MCF 10A (cell line): ENCODE measurements at regions of chr22 and their contacts with region 1.

Region 1: GRCh38 chr22:41468381-41469217 is at the starts of genes ACO2 and PHF5A:
- DNase-seq: peak; percentile 98
- H3K4me3 Mint-ChIP-seq: peak within 1 kb of the TSS; percentile 96
- H3K27ac Mint-ChIP-seq: peak within 1 kb of the TSS; percentile 100
- H3K4me1 Mint-ChIP-seq: peaks cover 33% of the 10 kb centered on the region
- H3K27me3 Mint-ChIP-seq: no peaks in the 10 kb centered on the region
- CTCF ChIP-seq: no peak
- total RNA-seq, gene ACO2: 105 and 109 TPM in 2 replicates
- total RNA-seq, gene PHF5A: 62.3 and 68.8 TPM in 2 replicates

Region 2: DNA sequence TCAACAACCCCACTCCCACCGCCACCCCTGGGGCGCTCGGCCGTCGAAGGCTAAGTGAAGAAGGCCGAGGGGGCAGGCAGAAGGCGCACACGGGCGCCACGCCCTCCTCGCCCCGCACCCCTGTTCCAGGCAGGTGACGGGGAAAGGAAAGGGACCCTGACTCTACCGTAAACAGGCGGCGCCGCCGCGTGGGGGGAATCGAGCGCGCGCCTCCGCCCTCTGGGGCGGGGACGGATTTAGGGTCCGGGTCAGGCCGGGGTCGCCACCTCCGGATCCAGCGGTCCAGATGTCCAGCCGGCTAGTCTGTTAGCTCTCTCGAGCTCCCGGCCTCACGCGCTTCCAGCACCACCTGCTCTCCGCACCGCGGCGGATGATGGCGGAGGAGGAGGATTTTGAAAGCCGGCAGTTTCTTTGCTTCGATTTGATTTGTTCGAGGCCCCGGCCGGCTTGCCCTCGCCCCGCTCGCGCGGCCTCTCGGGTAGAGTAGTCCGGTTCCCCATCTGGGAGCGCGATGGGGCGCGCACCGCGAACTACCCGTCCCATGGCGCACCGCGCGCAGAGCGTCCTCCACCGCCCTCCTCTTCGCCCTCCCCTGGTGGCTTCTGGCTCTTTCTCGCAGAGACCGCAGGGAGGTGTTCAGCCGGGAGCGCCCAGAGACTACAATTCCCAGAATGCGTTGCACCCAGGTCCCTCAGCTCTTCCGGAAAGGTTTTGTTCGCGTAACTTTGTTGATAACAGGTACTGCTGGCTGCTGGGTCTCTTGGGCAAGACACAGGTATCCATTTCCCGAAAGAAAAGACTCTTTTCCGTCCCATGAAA is 182.6 kb before region 1 on chr22 and contains the start of gene RANGAP1:
- CTCF ChIA-PET with region 1: interaction called, 3 read pairs
- POLR2A ChIA-PET with region 1: interaction called, 22 read pairs
- intact Hi-C with region 1: no loop called
- DNase-seq: peak; percentile 99
- H3K4me3 Mint-ChIP-seq: peak within 1 kb of the TSS; percentile 80
- H3K27ac Mint-ChIP-seq: peak within 1 kb of the TSS; percentile 85
- H3K4me1 Mint-ChIP-seq: peaks cover 29% of the 10 kb centered on the region
- H3K27me3 Mint-ChIP-seq: no peaks in the 10 kb centered on the region
- CTCF ChIP-seq: no peak
- total RNA-seq, gene RANGAP1: 84.7 and 117 TPM in 2 replicates

Region 3: GRCh38 chr22:41429232-41429950 is 39.2 kb before region 1 on chr22:
- CTCF ChIA-PET with region 1: no interaction called
- POLR2A ChIA-PET with region 1: no interaction called
- intact Hi-C with region 1: no loop called
- DNase-seq: peak; percentile 22
- H3K4me3 Mint-ChIP-seq: no peak overlapping the region
- H3K27ac Mint-ChIP-seq: no peak overlapping the region
- H3K4me1 Mint-ChIP-seq: peaks cover 6% of the 10 kb centered on the region
- H3K27me3 Mint-ChIP-seq: no peaks in the 10 kb centered on the region
- CTCF ChIP-seq: no peak

Region 4: DNA sequence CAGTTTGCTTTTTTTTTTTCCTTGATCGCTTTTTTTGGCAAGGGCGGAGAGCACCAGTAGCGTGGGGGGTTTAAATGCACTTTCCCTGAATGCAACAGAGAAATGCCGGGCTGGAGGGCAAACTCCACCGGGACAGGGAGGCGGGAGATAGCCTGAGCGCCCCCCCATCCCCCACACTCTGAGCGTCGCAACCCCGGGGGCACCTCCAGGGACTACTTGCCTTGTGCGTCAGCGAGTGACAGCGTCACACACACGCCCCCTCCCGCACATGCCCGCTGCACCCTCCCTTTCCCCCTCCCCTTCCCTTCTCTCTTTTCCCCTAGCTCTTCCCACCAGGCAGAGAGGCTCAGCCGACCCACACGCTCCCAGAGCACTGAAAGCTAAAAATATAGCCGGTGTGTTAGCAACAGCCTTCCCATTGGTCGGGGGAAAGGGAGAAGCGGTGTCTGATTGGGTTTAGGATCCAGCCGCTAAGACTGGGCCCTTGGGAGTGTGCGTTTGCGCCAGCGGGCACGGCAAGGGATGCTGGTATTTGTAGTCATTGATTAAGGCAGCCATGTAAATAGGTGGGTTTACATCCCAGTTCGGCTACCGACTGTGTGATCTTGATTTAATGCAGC is 20.3 kb before region 1 on chr22:
- CTCF ChIA-PET with region 1: interaction called, 8 read pairs
- POLR2A ChIA-PET with region 1: interaction called, 302 read pairs
- intact Hi-C with region 1: no loop called
- DNase-seq: peak; percentile 100
- H3K4me3 Mint-ChIP-seq: peak overlapping the region; percentile 96
- H3K27ac Mint-ChIP-seq: peak overlapping the region; percentile 97
- H3K4me1 Mint-ChIP-seq: peaks cover 11% of the 10 kb centered on the region
- H3K27me3 Mint-ChIP-seq: no peaks in the 10 kb centered on the region
- CTCF ChIP-seq: no peak

Region 5: GRCh38 chr22:41479671-41480396 is 11.2 kb after region 1 on chr22:
- CTCF ChIA-PET with region 1: interaction called, 3 read pairs
- POLR2A ChIA-PET with region 1: interaction called, 39 read pairs
- intact Hi-C with region 1: no loop called
- DNase-seq: peak; percentile 12
- H3K4me3 Mint-ChIP-seq: no peak overlapping the region
- H3K27ac Mint-ChIP-seq: peak overlapping the region; percentile 37
- H3K4me1 Mint-ChIP-seq: peaks cover 25% of the 10 kb centered on the region
- H3K27me3 Mint-ChIP-seq: no peaks in the 10 kb centered on the region
- CTCF ChIP-seq: no peak

Region 6: DNA sequence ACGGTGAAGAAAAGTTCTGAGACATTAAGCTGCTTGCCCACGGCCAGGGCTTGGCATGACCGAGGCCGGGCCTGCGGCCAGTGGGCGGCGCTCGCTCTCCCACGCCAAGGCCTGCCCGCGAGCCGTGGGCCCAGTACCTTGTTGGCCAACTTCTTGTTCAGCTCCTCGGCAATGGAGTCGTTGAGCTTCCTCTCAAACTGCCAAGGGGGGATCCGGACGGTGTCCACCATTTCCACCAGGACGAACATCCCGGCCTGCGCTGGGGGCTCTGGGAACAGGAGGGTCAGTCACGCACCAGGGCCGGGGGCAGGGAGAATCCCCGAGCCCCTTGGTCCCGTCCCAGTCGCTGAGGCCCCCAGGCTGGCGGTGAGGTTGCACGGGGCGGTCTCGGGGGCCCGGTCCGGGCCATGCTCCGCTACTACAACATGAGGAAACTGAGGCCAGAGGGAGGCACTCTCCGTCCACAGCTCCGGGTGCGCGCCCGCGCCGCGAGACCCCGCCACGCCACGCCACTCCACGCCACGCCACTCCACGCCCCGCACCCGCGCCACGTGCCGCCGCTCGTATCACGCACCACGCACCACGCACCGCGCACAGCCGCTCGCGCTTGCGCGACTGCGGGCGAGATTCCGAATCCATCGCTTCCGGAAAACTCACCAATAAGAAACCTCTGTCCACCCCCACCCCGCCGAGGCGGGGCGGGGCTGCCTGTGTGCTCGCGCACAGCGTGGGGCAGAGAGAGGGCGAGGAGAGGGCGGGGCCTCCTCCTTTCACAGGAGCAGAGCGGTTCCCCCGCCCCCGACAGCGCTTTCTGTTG is 75.5 kb after region 1 on chr22 and contains the start of gene POLR3H:
- CTCF ChIA-PET with region 1: interaction called, 5 read pairs
- POLR2A ChIA-PET with region 1: interaction called, 11 read pairs
- intact Hi-C with region 1: no loop called
- DNase-seq: peak; percentile 97
- H3K4me3 Mint-ChIP-seq: peak within 1 kb of the TSS; percentile 96
- H3K27ac Mint-ChIP-seq: peak within 1 kb of the TSS; percentile 89
- H3K4me1 Mint-ChIP-seq: peaks cover 28% of the 10 kb centered on the region
- H3K27me3 Mint-ChIP-seq: no peaks in the 10 kb centered on the region
- CTCF ChIP-seq: peak; percentile 27
- total RNA-seq, gene POLR3H: 26.3 and 35.5 TPM in 2 replicates